ENCODE measurements at regions of chr4 and their contacts with region 1.

Region 1: DNA sequence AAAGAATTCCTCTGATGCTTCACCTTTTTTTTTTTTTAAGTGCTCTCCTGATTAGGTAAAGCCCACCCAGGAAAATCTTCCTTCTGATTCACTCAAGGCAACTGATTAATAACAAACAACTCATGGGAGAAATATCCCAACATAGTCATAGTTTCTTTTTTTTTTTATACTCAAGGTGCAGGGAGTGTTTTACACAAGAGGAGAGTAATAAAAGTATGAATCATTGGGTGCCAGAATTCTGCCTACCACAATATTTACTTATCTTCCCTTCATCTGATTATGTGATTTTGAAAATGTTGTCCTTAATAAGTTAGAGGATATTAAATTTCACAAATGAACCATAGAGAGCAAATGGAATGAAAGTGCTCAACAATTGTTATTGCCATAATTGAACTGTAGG is 329.9 kb downstream of the TECRL start:
- DNase-seq: peak; percentile 89
- ATAC-seq: peak; percentile 90
- H3K4me3 ChIP-seq: 0 out of 2 replicates have a peak overlapping the region, but pooled peaks have one; percentile 7
- H3K27ac ChIP-seq: peak overlapping the region; percentile 43
- H3K4me1 ChIP-seq: peaks cover 28% of the 10 kb centered on the region
- H3K27me3 ChIP-seq: no peaks in the 10 kb centered on the region
- CTCF ChIP-seq: no peak

Region 2: DNA sequence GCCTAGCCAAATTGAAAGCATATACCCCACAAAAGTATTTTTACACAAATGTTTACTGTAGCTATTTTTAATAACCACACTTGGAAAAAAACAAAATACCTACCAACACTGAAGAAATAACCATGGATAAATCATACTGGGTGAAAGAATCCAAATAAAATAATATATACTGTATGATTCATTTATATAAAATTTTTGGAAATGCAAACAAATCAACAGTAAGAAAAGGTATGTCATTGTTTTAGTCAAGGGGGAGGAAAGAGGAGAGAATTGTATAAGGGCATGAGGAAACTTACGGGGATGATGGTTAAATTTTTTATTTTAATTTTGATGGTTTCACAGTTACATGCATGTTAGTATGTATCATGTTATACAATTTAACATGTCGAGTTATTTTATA is 227.8 kb before region 1 on chr4:
- CTCF ChIA-PET with region 1: no interaction called
- POLR2A ChIA-PET with region 1: no interaction called
- intact Hi-C with region 1: loop called (anchors 2 kb)
- DNase-seq: peak; percentile 38
- ATAC-seq: peak; percentile 99
- H3K4me3 ChIP-seq: no peak overlapping the region
- H3K27ac ChIP-seq: no peak overlapping the region
- H3K4me1 ChIP-seq: no peaks in the 10 kb centered on the region
- H3K27me3 ChIP-seq: no peaks in the 10 kb centered on the region
- CTCF ChIP-seq: no peak

Region 3: GRCh38 chr4:63937961-63938360 is 141.4 kb before region 1 on chr4:
- CTCF ChIA-PET with region 1: no interaction called
- POLR2A ChIA-PET with region 1: no interaction called
- intact Hi-C with region 1: loop called (anchors 2 kb)
- DNase-seq: peak; percentile 68
- ATAC-seq: peak; percentile 92
- H3K4me3 ChIP-seq: peak overlapping the region; percentile 51
- H3K27ac ChIP-seq: peak overlapping the region; percentile 27
- H3K4me1 ChIP-seq: peaks cover 15% of the 10 kb centered on the region
- H3K27me3 ChIP-seq: no peaks in the 10 kb centered on the region
- CTCF ChIP-seq: no peak

Region 4: DNA sequence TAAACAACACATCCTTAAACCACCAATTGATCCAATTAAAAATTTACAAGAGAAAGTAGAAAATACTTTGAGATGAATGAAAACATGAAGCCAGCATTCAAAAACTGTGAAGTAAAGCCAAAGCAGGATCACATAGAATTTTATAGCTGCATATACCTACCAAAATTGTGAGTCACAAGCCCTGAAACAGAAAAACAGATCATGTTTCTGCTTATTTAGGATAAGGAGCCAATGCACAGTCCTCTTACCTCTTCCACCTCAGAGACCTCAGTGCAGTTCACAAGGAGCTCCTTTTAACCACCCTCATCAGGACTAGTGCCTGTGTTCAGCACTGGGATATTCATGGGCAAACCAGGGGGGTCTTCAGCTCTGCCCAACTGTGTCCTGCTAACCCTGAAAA is 56.8 kb before region 1 on chr4:
- CTCF ChIA-PET with region 1: no interaction called
- POLR2A ChIA-PET with region 1: no interaction called
- intact Hi-C with region 1: loop called (anchors 1 kb)
- DNase-seq: peak; percentile 83
- ATAC-seq: peak; percentile 100
- H3K4me3 ChIP-seq: no peak overlapping the region
- H3K27ac ChIP-seq: peak overlapping the region; percentile 29
- H3K4me1 ChIP-seq: peaks cover 13% of the 10 kb centered on the region
- H3K27me3 ChIP-seq: no peaks in the 10 kb centered on the region
- CTCF ChIP-seq: no peak

Region 5: GRCh38 chr4:64095398-64095797 is 16.1 kb after region 1 on chr4:
- CTCF ChIA-PET with region 1: interaction called, 4 read pairs
- POLR2A ChIA-PET with region 1: no interaction called
- intact Hi-C with region 1: loop called (anchors 1 kb)
- DNase-seq: peak; percentile 63
- ATAC-seq: peak; percentile 98
- H3K4me3 ChIP-seq: no peak overlapping the region
- H3K27ac ChIP-seq: no peak overlapping the region
- H3K4me1 ChIP-seq: peaks cover 4% of the 10 kb centered on the region; the same call in 1 of the 2 replicates
- H3K27me3 ChIP-seq: no peaks in the 10 kb centered on the region
- CTCF ChIP-seq: no peak